ENCODE measurements at regions of chr10 and their contacts with region 1.

Region 1: DNA sequence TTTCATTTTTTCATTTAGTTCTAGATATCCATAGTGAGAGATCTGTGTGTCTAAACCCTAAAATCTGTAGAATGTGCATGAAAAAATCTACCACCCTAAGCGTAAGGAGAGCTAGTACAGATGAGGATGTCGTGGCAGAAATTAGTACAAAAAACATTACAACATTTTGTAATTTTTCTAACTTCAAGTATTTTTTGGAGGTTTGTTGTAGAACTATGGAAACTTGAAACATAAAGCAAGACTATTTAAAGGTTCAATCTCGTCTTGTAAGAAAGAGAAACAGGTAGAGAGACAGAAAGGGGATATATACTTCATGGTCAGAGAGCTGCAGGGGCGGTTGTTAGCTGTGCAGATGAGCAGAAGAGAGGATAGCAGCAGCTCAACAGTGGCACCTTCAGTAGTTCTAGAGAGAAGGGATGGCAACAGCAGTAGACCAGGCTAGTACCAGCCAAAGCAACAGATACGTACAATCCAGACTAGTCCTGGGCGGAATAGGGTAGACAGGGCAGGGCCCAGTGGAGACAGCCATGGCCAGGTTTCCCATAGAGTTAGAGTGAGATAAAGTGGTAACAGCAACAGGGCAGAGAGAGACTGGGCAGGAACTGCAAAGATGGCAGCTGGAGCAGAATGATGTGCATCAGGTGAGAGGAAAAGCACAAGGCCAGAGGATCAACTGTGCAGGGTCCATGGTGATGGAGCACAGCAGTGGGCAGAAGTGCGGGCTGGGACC is 145.2 kb downstream of the FRMD4A start:
- DNase-seq: peak; percentile 79
- ATAC-seq: peak; percentile 94
- H3K4me3 Mint-ChIP-seq: peak overlapping the region; percentile 56
- H3K27ac Mint-ChIP-seq: peak overlapping the region; percentile 96
- H3K4me1 Mint-ChIP-seq: peaks cover 24% of the 10 kb centered on the region
- H3K27me3 Mint-ChIP-seq: peaks cover 31% of the 10 kb centered on the region
- CTCF ChIP-seq: no peak

Region 2: GRCh38 chr10:13787015-13787421 is 398.5 kb before region 1 on chr10:
- CTCF ChIA-PET with region 1: interaction called, 4 read pairs
- POLR2A ChIA-PET with region 1: interaction called, 12 read pairs
- intact Hi-C with region 1: loop called (anchors 5 kb)
- DNase-seq: peak; percentile 84
- ATAC-seq: peak; percentile 89
- H3K4me3 Mint-ChIP-seq: peak overlapping the region; percentile 34
- H3K27ac Mint-ChIP-seq: peak overlapping the region; percentile 94
- H3K4me1 Mint-ChIP-seq: peaks cover 34% of the 10 kb centered on the region
- H3K27me3 Mint-ChIP-seq: no peaks in the 10 kb centered on the region
- CTCF ChIP-seq: no peak

Region 3: GRCh38 chr10:14173706-14174594 is 11.5 kb before region 1 on chr10:
- CTCF ChIA-PET with region 1: interaction called, 3 read pairs
- POLR2A ChIA-PET with region 1: interaction called, 19 read pairs
- intact Hi-C with region 1: no loop called
- DNase-seq: no peak
- ATAC-seq: no peak
- H3K4me3 Mint-ChIP-seq: peak overlapping the region; percentile 73
- H3K27ac Mint-ChIP-seq: no peak overlapping the region
- H3K4me1 Mint-ChIP-seq: peaks cover 15% of the 10 kb centered on the region
- H3K27me3 Mint-ChIP-seq: peaks cover 69% of the 10 kb centered on the region
- CTCF ChIP-seq: no peak

Region 4: DNA sequence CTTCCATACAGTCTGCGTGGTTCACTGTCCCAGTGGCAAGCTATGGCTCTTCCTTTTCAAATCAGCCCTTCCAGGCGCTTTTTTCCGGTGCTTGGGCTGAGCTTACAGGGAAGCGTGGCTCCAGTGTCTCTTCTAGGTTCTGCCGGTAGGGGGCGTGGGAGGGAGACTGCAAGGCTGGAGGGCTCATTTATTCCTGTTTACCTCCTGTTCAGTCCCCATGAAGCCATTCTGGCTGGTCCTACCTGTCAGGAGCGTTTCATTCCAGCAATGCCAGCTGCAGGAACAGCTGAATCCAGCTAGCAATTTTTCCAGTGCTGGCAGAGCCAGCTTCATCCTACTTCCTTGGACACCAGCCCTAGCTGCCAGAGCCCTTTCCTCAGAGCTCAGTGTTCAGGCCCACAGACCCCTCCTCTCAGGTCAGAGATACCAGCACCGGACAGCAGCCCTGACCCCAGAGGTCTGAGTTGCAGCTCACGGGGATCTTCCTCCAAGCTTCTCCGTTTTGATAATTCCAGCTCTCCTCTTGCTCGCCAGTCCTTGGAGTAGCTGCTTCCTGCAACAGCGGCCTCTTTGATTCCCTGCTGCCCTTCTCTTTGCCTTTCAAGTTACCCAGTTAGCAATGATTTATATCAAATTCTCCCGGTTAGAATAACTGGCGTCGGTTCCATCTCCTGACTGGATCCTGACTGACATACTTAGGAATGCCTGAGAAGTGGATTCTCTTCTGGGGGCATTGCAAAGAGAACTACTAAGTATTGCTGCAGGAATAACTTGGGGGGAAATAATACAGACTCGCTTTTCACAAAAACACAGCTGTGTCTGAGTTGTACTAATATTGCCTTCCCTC is 15.4 kb after region 1 on chr10:
- CTCF ChIA-PET with region 1: interaction called, 29 read pairs
- POLR2A ChIA-PET with region 1: interaction called, 25 read pairs
- intact Hi-C with region 1: no loop called
- DNase-seq: peak; percentile 39
- ATAC-seq: no peak
- H3K4me3 Mint-ChIP-seq: no peak overlapping the region
- H3K27ac Mint-ChIP-seq: no peak overlapping the region
- H3K4me1 Mint-ChIP-seq: no peaks in the 10 kb centered on the region
- H3K27me3 Mint-ChIP-seq: peaks cover 14% of the 10 kb centered on the region
- CTCF ChIP-seq: peak; percentile 7

Region 5: GRCh38 chr10:14878266-14879054 is 693.0 kb after region 1 on chr10 and contains the start of gene SUV39H2:
- CTCF ChIA-PET with region 1: no interaction called
- POLR2A ChIA-PET with region 1: interaction called, 10 read pairs
- intact Hi-C with region 1: no loop called
- DNase-seq: peak; percentile 95
- ATAC-seq: peak; percentile 93
- H3K4me3 Mint-ChIP-seq: peak within 1 kb of the TSS; percentile 96
- H3K27ac Mint-ChIP-seq: peak within 1 kb of the TSS; percentile 93
- H3K4me1 Mint-ChIP-seq: peaks cover 40% of the 10 kb centered on the region
- H3K27me3 Mint-ChIP-seq: no peaks in the 10 kb centered on the region
- CTCF ChIP-seq: no peak
- total RNA-seq, gene SUV39H2: 40.9 to 45.8 TPM